A549 (cell line): ENCODE measurements at regions of chr4 and their contacts with region 1.

Region 1: DNA sequence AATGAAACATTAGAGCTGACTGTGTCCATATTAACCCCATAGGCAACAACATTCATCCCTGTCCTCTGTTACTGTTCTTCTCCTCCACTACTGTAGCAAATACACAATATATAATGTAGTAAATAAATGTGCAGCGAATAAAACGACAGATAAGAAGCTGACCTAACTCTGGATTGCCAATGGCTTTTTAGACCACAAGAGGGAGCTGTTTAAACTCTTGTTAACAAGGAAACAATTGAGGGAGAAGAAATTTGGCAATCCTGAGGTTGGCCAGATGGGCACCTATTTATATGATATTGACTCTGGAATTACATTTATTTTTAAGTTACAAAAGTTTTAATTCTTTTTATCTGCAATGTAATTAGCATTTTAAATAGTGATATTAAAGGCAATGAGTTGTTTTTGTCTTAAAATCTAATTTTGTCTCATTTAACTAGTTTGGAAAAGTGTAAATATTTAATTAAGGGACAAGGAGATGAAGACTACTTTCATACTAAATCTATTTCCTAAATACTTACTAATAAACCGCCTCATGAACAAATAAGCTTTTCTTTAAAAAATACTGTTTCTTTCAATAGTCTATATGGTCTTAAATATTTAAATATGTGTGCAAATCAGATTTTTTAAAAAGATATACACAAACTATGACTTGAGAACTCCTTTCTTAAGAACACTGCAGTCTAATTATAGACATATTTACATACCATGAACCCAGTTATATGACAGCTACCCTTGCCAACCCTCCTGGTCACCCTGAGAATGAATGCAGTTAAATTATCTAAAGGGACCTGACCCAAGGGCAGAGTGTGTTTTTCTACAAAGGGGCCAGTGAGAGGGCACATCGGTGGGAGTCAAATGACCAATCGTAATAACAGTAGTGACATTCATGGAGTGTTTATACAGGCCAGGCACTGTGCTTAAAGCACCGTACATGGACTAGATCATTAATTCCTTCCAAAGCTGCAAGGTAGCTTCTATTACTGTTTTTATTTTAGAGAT is 52.9 kb upstream of the HPF1 start:
- DNase-seq: peak; percentile 61 to 76
- ATAC-seq: peak; percentile 56 to 82
- H3K4me3 ChIP-seq: no peak overlapping the region
- H3K27ac ChIP-seq: no peak overlapping the region
- H3K4me1 ChIP-seq: peaks cover 14% of the 10 kb centered on the region; the same call in 1 of the 3 replicates
- CTCF ChIP-seq: peak; percentile 84
- EP300 ChIP-seq: no peak
- POLR2A ChIP-seq: no peak
- RAD21 ChIP-seq: peak; percentile 75 to 79

Region 2: DNA sequence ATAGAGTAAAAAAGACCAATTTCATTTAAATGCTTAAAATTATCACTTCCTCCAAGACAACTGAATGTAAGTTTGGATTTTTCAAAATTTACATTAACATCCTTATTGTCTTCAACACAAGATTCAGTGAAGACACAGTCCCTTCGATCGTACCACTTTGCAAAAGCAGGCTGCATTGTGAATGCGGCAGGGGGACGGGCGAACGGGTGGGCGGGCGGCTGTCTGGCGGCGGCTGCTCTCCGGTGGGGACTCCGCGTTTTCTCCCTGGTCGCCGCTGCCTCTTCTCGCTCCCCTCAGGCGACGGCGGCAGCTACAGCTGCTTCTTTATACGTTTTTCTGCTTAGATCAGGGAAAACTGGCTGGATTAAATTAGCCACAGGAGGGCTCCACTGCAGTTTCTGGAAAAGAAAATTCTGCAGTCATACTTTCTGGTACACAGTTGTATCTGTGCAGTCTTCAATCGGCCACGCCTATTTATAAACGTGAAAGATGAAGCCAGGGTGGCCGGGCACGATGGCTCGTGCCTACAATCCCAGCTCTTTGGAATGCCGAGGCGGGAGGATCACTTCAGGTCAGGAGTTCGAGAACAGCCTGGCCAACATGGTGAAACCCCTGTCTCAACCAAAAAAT is 19.0 kb before region 1 on chr4:
- CTCF ChIA-PET with region 1: interaction called, 12 read pairs
- POLR2A ChIA-PET with region 1: no interaction called
- DNase-seq: peak; percentile 37 to 69
- ATAC-seq: peak; percentile 86 to 92
- H3K4me3 ChIP-seq: peak overlapping the region; percentile 41
- H3K27ac ChIP-seq: peak overlapping the region; percentile 57 to 86; a peak in 5 of 6 replicates
- H3K4me1 ChIP-seq: peaks cover 19% of the 10 kb centered on the region
- CTCF ChIP-seq: peak; percentile 58
- EP300 ChIP-seq: no peak
- POLR2A ChIP-seq: no peak
- RAD21 ChIP-seq: peak; percentile 43 to 56; a peak in 4 of 5 replicates

Region 3: DNA sequence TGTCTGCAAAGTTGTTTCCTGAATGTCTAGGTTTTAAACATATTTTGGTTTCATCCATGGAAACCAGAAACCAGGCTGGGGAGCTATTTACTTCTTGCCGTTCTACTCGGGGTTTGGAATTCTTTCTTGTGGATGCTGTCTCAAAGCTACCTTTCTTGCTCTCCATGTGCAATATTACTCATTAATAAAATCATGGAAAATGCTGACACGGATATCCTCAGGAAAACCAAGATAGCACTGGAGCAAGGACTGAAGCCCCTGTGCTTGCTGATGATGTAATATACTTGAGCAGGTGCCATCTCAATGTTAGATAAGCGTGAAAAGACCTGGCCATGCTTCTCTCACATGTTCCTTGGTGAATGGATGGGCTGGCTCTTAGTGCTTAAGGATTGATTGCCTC is 11.4 kb before region 1 on chr4:
- CTCF ChIA-PET with region 1: interaction called, 10 read pairs
- POLR2A ChIA-PET with region 1: no interaction called
- DNase-seq: no peak
- ATAC-seq: no peak
- H3K4me3 ChIP-seq: no peak overlapping the region
- H3K27ac ChIP-seq: no peak overlapping the region
- H3K4me1 ChIP-seq: peaks cover 9% of the 10 kb centered on the region
- CTCF ChIP-seq: no peak
- EP300 ChIP-seq: no peak
- POLR2A ChIP-seq: no peak
- RAD21 ChIP-seq: no peak

Region 4: GRCh38 chr4:169840554-169840953 is 29.9 kb after region 1 on chr4:
- CTCF ChIA-PET with region 1: no interaction called
- POLR2A ChIA-PET with region 1: no interaction called
- DNase-seq: no peak
- ATAC-seq: no peak
- H3K4me3 ChIP-seq: no peak overlapping the region
- H3K27ac ChIP-seq: no peak overlapping the region
- H3K4me1 ChIP-seq: no peaks in the 10 kb centered on the region; the same call in 2 of the 3 replicates
- CTCF ChIP-seq: no peak
- EP300 ChIP-seq: no peak
- POLR2A ChIP-seq: no peak
- RAD21 ChIP-seq: no peak

Region 5: DNA sequence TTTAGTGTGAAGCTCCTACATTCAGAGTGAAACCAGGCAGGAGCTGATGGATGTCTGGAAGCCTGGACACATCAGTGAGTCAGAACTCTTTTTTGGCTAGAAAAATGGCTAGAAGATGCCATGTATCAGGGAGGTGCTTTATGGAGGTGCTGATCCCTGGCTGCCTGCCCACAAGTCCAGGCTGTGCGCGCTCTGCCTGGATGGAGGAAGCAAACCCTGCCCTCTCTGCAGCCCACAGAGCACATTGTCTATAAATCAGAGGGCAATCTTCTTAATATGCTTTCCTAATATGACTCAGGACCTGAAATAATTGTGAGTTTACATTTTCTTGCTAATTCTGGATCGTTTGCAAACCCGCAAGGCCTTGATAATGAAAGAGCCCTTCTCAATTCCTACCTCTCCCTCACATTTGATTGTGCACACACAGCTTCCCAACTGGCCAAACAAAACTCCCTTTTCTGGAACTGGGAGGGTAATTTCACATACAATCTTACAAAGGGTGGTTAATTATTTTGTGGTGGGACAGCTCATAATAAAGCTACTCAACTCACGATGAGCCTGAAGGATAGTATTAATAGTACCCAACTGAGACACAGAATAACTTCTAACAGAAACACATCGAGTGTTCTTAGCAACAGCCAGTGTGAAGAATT is 203.9 kb after region 1 on chr4:
- CTCF ChIA-PET with region 1: interaction called, 17 read pairs
- POLR2A ChIA-PET with region 1: no interaction called
- DNase-seq: no peak
- ATAC-seq: no peak
- H3K4me3 ChIP-seq: no peak overlapping the region
- H3K27ac ChIP-seq: no peak overlapping the region
- H3K4me1 ChIP-seq: no peaks in the 10 kb centered on the region
- CTCF ChIP-seq: no peak
- EP300 ChIP-seq: no peak
- POLR2A ChIP-seq: no peak
- RAD21 ChIP-seq: no peak

Region 6: GRCh38 chr4:170022211-170022610 is 211.6 kb after region 1 on chr4:
- CTCF ChIA-PET with region 1: interaction called, 20 read pairs
- POLR2A ChIA-PET with region 1: interaction called, 7 read pairs
- DNase-seq: no peak
- ATAC-seq: no peak
- H3K4me3 ChIP-seq: no peak overlapping the region
- H3K27ac ChIP-seq: no peak overlapping the region
- H3K4me1 ChIP-seq: no peaks in the 10 kb centered on the region
- CTCF ChIP-seq: no peak
- EP300 ChIP-seq: no peak
- POLR2A ChIP-seq: no peak
- RAD21 ChIP-seq: no peak

Region 7: DNA sequence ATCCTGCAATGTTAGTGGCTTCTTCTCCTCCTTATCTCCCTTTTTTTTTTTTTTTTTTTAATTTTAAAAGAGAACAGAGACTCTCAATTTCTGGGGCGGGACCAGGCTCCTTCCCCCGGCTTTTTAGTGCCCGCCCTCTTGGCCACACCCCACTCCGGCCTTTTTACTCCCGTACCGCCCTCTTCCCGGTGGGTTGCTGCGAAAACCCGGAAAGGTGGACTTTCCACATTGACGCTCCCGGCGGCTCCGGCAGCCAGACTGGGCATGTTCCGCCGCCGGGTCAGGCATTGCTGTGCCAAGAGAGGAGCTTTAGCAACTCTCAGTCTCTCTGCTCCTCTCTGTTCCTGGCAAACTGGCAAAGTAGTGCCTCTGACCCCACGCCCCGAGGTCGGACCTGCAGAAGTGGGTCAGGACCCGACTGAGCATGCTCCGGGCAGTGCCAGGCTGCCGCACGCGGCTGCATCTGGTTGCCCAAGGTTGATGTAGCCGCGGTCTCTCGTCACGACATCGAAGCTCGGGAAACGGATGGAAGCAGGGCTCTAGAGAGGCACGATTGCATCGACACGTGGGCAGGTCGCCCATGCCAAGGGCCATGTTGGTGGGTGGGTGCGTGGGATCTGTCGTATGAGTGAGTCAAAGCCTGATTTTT is 216.7 kb after region 1 on chr4:
- CTCF ChIA-PET with region 1: interaction called, 20 read pairs
- POLR2A ChIA-PET with region 1: interaction called, 7 read pairs
- DNase-seq: peak; percentile 76 to 93
- ATAC-seq: peak; percentile 56 to 90
- H3K4me3 ChIP-seq: peak overlapping the region; percentile 98
- H3K27ac ChIP-seq: peak overlapping the region; percentile 84 to 100
- H3K4me1 ChIP-seq: no peaks in the 10 kb centered on the region
- CTCF ChIP-seq: no peak
- EP300 ChIP-seq: no peak
- POLR2A ChIP-seq: no peak
- RAD21 ChIP-seq: no peak

Region 8: GRCh38 chr4:170047771-170048354 is 237.2 kb after region 1 on chr4:
- CTCF ChIA-PET with region 1: interaction called, 56 read pairs
- POLR2A ChIA-PET with region 1: interaction called, 3 read pairs
- DNase-seq: peak; percentile 8 to 64
- ATAC-seq: peak in 1 of 2 experiments; percentile 48; a peak in 2 of 6 replicates
- H3K4me3 ChIP-seq: no peak overlapping the region
- H3K27ac ChIP-seq: no peak overlapping the region
- H3K4me1 ChIP-seq: no peaks in the 10 kb centered on the region
- CTCF ChIP-seq: peak; percentile 72
- EP300 ChIP-seq: no peak
- POLR2A ChIP-seq: no peak
- RAD21 ChIP-seq: peak; percentile 79 to 84